ENCODE measurements at regions of chr1 and their contacts with region 1.

Region 1: GRCh38 chr1:24847995-24848881 is 81.8 kb downstream of the RUNX3 start:
- DNase-seq: peak; percentile 98

Region 2: GRCh38 chr1:24936684-24937083 is 88.4 kb after region 1 on chr1:
- intact Hi-C with region 1: loop called in 1 of 2 experiments (anchors 1 kb)
- DNase-seq: no peak

Region 3: GRCh38 chr1:25037174-25038074 is 189.2 kb after region 1 on chr1:
- intact Hi-C with region 1: loop called in 1 of 2 experiments (anchors 5 kb)
- DNase-seq: no peak

Region 4: GRCh38 chr1:25099343-25099951 is 251.2 kb after region 1 on chr1:
- intact Hi-C with region 1: loop called in 1 of 2 experiments (anchors 10 kb)
- DNase-seq: no peak

Region 5: GRCh38 chr1:25204797-25205480 is 356.7 kb after region 1 on chr1:
- intact Hi-C with region 1: loop called in 1 of 2 experiments (anchors 10 kb)
- DNase-seq: no peak

Region 6: DNA sequence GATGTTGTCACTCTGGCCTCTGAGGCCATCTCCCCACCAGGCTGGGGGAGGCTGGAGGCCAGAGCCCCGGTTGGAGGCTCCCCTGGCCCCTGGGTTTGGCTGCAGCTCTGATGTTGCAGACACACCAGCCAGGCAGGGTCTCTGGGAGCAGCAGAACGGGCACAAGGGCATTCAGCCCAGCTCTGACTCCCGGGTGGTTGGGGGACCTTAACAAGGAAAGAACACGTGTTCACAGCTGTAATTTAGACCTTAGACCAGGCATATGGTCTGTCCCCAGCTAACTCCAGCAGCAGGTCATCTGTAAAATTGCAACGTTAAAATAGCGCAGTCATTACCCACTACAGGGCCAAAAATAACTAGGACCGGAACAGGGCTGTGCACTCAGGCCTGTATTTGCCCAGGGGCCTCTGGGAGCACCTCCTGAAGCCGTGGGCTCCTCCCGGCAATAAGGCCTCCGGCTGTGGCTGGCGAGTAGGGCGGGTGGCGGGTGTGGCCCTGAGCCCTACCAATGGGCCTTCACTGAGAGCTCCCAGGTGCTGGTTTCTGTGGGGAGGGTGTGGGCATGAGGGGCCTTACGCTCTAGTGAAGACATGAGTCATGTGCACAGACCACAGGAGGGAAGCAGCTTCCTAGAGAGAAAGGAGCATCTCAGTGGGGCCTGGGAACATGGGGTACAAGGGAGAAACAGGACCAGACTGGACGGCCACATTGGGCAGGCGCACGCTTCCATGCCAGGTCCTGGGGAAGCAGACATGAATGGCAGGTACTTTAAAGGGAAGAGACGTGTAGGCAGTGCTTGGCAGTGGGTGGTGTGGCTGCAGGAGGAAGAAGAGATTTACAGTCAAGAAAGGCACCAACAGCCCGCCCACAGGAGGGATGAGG is 701.3 kb after region 1 on chr1:
- intact Hi-C with region 1: no loop called
- DNase-seq: no peak

Measured in posterior vena cava (tissue), 2 donors.